CD14-positive monocyte (primary cell): ENCODE measurements at regions of chr3 and their contacts with region 1.

Region 1: DNA sequence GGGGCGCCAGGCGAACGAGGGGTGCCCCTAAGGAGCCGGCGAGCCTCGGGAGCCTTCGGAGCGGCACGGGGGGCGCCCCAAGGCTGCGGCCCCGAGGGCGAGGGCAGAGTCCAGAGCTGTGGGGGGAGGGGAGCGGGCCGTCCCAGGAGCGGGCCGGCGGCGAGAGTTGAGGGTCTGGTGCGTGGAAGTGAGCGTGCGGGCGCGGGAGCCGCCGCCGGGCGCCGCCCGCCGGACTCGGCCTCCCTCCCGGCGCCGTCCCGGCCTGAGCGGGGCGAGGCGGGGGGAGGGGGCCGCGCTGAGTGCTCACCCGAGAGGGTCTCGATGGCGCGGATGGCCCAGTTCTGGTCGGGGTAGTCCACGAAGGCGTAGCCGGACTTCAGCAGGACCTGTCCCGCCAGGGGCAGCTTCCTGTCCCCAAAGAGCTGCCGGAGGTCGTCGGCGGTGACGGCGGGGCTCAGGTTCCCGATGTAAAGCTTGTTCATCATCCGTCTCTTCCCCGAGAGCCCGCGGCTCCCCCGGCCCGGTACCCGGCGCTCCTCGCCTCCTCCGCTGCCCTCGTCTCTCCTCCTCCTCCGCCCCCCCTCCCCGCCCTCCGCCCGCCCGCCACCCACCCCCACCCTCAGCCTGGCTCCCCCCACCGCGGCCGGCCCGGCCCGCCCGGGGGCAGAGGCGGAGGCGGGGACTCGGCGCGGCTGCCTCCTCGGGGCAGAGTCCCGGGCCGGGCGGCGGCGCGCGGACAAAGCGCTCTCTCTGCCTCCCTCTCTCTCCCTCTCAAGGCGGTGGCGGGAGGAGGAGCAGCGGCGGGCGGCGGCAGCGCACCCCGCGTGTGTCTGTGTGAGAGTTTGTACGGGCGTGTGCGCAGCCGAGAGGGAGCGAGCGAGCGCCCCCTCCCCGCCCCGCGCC is at the start of gene IGF2BP2:
- DNase-seq: peak; percentile 49 to 63 (median 59)
- H3K4me3 ChIP-seq: peak within 1 kb of the TSS; percentile 85 to 97 (median 95)
- H3K4me3 Mint-ChIP-seq: peak within 1 kb of the TSS; percentile 94 to 96
- H3K27ac ChIP-seq: peak within 1 kb of the TSS; percentile 45 to 54
- H3K27ac Mint-ChIP-seq: peak within 1 kb of the TSS; percentile 42 to 88 (median 74)
- H3K4me1 ChIP-seq: peaks cover 5 to 32% of the 10 kb centered on the region in 2 donors
- H3K4me1 Mint-ChIP-seq: peaks cover 27% of the 10 kb centered on the region
- H3K27me3 ChIP-seq: peaks cover 0 to 5% of the 10 kb centered on the region in 2 donors
- H3K27me3 Mint-ChIP-seq: peaks cover 3 to 16% (median 9%) of the 10 kb centered on the region in 3 donors
- CTCF ChIP-seq: no peak
- polyA plus RNA-seq, gene IGF2BP2: 0.78 to 2.8 (median 1.00) TPM

Region 2: GRCh38 chr3:185937689-185938463 is 113.1 kb after region 1 on chr3 and contains the start of gene TRA2B:
- intact Hi-C with region 1: loop called (anchors 5 to 10 kb)
- DNase-seq: peak; percentile 98 to 99 (median 99)
- H3K4me3 ChIP-seq: peak within 1 kb of the TSS; percentile 76 to 100 (median 99)
- H3K4me3 Mint-ChIP-seq: peak within 1 kb of the TSS; percentile 100
- H3K27ac ChIP-seq: peak within 1 kb of the TSS; percentile 97 to 99
- H3K27ac Mint-ChIP-seq: peak within 1 kb of the TSS; percentile 100
- H3K4me1 ChIP-seq: peaks cover 32 to 39% of the 10 kb centered on the region in 2 donors
- H3K4me1 Mint-ChIP-seq: peaks cover 37% of the 10 kb centered on the region
- H3K27me3 ChIP-seq: no peaks in the 10 kb centered on the region
- H3K27me3 Mint-ChIP-seq: peaks cover 0 to 4% (median 0%) of the 10 kb centered on the region in 3 donors
- CTCF ChIP-seq: peak; percentile 44
- polyA plus RNA-seq, gene TRA2B: 99.9 to 507 (median 121) TPM